ENCODE measurements at regions of chr11 and their contacts with region 1.

Region 1: GRCh38 chr11:108647701-108648527 is 17.0 kb upstream of the DDX10 start:
- DNase-seq: peak; percentile 54
- CTCF ChIP-seq: peak; percentile 83

Region 2: GRCh38 chr11:108117746-108118371 is 530.1 kb before region 1 on chr11:
- CTCF ChIA-PET with region 1: interaction called, 25 read pairs
- POLR2A ChIA-PET with region 1: no interaction called
- DNase-seq: peak; percentile 32
- CTCF ChIP-seq: peak; percentile 42

Region 3: DNA sequence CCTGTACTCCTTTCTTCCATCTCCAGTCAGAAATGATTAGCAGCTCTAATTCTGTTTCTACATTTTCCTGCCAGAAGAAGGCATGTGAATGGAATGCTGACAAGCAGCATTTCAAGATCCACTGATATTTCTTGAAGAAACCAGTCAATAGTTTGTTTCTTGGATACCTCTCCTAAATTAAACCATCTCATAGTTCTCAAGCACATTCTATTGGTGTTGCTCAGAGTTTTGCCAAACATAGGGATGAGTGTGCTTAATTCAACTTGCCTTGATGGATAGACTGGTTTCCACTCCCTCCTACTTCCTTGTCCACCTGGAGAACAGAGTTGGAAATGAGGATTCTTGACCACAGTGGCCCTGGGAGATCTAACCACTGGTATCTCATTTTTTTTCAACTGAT is 12.8 kb before region 1 on chr11:
- CTCF ChIA-PET with region 1: interaction called, 61 read pairs
- POLR2A ChIA-PET with region 1: interaction called, 4 read pairs
- DNase-seq: no peak
- CTCF ChIP-seq: no peak

Region 4: DNA sequence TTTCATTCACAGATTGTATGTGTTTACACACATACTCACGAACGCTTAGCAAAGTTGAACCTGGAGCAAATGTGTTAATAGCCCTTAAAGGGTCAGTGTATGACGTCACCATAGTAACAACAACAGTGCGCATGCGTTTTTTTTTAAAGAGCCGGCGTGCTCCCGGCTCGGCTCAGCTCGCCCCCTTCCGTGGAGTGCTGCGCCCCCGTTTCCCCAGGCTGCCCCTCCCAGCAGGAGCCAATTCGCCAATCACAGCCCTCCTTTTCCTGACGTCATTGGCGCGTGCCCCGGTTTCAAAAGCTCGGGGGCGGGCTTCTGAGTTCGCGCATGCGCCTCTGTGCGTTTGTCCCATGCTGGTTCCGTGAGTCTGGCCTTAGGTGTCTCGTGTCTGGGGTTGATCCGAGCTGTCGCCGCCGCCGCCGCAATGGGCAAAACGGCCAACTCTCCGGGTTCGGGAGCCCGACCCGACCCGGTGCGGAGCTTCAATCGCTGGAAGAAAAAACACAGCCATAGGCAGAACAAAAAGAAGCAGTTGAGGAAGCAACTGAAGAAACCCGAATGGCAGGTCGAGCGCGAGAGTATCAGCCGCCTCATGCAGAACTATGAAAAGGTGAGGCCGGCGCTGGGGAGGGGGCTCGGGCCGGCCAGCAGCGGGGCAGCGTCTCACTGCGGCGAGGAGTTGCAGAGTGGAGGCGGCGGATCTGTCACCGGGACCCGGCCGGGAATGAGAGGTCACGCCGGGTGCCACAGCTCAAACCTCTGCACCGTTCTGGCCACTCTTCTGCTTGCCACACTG is 17.0 kb after region 1 on chr11 and contains the start of gene DDX10:
- CTCF ChIA-PET with region 1: interaction called, 15 read pairs
- POLR2A ChIA-PET with region 1: no interaction called
- DNase-seq: peak; percentile 97
- CTCF ChIP-seq: no peak

Region 5: DNA sequence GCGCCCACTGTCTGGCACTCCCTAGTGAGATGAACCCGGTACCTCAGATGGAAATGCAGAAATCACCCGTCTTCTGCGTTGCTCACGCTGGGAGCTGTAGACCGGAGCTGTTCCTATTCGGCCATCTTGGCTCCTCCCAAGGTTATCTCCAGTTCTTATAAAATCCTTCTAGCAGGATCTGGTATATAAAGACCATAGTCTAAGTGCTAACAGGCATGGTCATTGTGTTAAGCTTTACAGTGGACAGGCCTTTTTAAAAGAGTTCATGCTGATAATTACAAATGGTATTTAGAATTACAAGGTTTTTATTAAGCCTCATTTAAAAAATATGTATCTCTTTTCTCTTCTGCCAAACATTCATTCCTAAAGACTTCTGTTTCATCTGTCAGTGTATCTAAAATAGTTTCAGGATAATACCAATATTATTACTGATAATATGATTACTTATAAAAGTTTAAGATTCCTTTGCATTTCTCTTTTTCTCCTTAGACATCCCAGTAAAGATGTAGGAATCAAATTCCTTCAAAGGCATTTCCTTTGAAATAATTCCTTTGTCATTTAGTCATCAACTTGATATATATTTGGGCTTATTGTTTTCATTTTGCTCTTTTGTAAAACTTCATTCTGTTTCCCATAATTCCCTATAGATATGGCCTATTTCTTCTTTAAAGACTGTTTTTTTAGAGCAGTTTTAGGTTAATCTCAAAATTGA is 37.7 kb after region 1 on chr11:
- CTCF ChIA-PET with region 1: no interaction called
- POLR2A ChIA-PET with region 1: no interaction called
- DNase-seq: no peak
- CTCF ChIP-seq: no peak